HCT116 (cell line): ENCODE measurements at regions of chr3 and their contacts with region 1.

Region 1: DNA sequence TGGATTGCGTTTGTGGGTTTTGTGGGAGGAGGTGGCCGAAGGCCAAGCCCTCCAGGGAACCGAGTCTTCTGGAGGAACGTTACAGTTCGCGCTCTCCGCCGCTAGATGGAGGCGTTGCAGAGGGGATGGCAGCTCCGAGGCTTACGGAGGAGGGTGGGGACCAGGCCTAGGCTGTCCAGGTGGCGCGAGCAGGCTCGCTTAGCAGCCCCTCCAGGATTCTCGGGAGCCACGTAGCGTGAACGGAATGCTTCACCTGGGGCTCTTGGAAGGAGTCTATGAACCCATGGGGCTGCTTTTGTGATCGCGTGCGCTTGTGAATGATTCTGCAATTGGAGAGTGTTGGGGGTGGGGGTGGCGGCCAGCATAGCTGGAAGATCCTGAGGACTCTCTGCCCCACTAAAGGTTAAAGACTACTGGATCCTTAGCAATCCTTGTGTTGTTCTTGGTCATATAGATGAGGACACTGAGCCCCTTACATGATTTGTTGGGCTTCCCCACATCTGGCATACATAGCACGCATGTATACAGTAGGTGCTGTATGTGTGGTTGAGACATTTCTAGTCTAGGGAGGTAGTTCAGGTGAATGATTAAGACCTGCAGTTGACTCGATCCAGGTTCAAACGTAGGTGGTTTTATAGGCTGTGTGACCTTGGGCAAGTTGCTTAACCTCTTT is 25.7 kb downstream of the FAM3D start:
- DNase-seq: peak; percentile 50
- ATAC-seq: peak; percentile 98
- H3K4me3 ChIP-seq: no peak overlapping the region
- H3K27ac ChIP-seq: no peak overlapping the region
- H3K4me1 ChIP-seq: peaks cover 0 to 5% of the 10 kb centered on the region in 2 experiments; a peak in 1 of 4 replicates
- H3K27me3 ChIP-seq: no peaks in the 10 kb centered on the region
- CTCF ChIP-seq: peak; percentile 82 to 92 (median 91)
- POLR2A ChIP-seq: no peak
- RAD21 ChIP-seq: peak; percentile 98

Region 2: DNA sequence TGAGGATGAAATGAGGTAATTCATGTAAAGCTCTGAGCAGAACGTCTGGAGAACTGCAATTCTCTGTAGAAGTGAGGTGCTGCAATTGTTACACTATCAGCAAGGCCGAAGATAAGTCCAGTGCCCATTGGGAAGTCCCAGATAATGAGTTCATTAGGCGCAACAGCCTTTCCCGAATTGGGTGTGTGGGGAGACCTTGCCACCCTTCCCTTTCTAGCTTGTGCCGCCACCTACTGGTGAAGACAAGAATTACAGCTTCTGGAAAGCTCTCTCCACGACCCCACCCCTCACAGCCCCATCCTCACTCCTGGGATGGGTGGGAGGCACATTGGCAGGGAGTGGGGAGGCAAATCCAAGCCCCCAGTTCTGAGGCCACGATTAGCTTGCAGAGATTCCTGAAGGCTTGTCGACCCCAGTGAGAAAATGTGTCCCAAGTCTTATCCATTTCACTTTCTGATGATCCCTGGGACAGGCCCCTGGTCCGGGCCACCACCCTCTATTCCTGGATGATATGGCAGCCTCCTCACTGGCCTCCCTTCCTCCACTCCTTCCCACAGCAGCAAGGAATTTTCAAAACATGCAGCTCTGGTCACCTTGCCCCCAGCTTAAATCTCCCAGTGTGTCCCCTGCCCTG is 10.6 kb before region 1 on chr3:
- CTCF ChIA-PET with region 1: interaction called, 17 read pairs
- POLR2A ChIA-PET with region 1: no interaction called
- RAD21 ChIA-PET with region 1: no interaction called
- intact Hi-C with region 1: no loop called
- DNase-seq: peak; percentile 29
- ATAC-seq: peak; percentile 93
- H3K4me3 ChIP-seq: no peak overlapping the region
- H3K27ac ChIP-seq: no peak overlapping the region
- H3K4me1 ChIP-seq: peaks cover 0 to 3% of the 10 kb centered on the region in 2 experiments; a peak in 1 of 4 replicates
- H3K27me3 ChIP-seq: no peaks in the 10 kb centered on the region
- CTCF ChIP-seq: peak; percentile 82 to 92 (median 89)
- POLR2A ChIP-seq: no peak
- RAD21 ChIP-seq: peak; percentile 96

Region 3: GRCh38 chr3:58994746-58995330 is 354.0 kb after region 1 on chr3:
- CTCF ChIA-PET with region 1: no interaction called
- POLR2A ChIA-PET with region 1: no interaction called
- RAD21 ChIA-PET with region 1: no interaction called
- intact Hi-C with region 1: loop called (anchors 10 kb)
- DNase-seq: peak; percentile 60
- ATAC-seq: peak; percentile 59; the same call in 1 of the 2 replicates
- H3K4me3 ChIP-seq: no peak overlapping the region
- H3K27ac ChIP-seq: no peak overlapping the region
- H3K4me1 ChIP-seq: peaks cover 0 to 32% of the 10 kb centered on the region in 2 experiments; a peak in 2 of 4 replicates
- H3K27me3 ChIP-seq: no peaks in the 10 kb centered on the region
- CTCF ChIP-seq: peak; percentile 61 to 85 (median 81); a peak in 5 of 6 replicates
- POLR2A ChIP-seq: no peak
- RAD21 ChIP-seq: peak; percentile 86

Region 4: DNA sequence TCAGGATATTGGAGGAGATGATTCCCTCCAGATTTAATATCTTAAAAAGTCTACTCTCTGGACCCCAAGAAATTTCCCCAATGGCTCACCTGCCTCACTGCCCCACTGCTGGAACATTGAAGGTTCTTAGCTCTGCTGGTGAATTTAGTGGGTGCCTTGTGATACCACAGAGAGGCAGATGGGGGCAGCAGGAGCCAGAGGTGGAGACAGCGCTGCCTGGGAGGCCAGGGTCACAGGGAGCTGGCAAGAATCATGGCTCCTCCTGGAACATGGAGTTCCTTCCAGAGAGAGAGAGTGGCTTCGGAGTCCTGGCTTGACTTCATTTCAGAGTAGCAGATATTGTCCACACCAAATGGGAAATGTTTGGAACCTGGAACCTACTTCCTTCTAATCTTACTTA is 672.5 kb after region 1 on chr3:
- CTCF ChIA-PET with region 1: no interaction called
- POLR2A ChIA-PET with region 1: no interaction called
- RAD21 ChIA-PET with region 1: no interaction called
- intact Hi-C with region 1: loop called (anchors 5 kb)
- DNase-seq: peak; percentile 28
- ATAC-seq: peak; percentile 99
- H3K4me3 ChIP-seq: no peak overlapping the region
- H3K27ac ChIP-seq: no peak overlapping the region
- H3K4me1 ChIP-seq: no peaks in the 10 kb centered on the region
- H3K27me3 ChIP-seq: peaks cover 22% of the 10 kb centered on the region
- CTCF ChIP-seq: peak; percentile 44 to 70 (median 67); a peak in 5 of 6 replicates
- POLR2A ChIP-seq: no peak
- RAD21 ChIP-seq: peak; percentile 69

Region 5: DNA sequence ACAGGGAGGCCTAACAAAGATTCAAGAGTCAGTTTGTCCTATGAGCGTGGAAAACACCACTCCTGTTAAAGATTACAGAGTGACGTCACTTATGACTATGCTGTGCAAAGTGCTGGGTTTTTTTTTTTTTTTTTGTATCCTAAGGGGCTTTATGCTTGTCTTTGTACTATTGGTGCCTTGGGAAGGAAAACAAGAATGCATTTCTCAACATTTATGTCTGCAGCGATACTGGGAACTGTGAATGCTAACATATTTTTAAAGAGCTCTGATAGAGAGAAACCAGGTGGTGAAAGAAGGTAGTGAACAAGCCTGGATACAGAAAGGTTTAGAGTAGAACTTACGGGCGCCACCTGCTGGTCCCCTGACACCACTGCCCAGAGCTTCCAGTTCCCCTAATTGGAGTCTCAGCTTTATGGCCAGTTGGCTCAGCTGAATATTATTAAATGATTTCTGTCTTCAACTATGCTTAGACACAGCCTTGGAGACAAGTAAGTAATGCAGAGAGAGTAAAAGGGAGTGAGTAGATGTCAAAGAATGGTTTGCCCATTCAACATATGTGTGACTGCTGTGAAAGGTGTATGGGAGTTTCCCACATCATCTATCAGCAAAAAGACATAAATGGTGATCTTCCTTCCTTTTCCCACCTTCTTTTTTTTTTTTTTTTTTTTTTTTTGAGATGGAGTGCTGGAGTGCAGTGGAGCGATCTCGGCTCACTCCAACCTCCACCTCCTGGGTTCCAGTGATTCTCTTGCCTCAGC is 1216.9 kb after region 1 on chr3:
- CTCF ChIA-PET with region 1: no interaction called
- POLR2A ChIA-PET with region 1: no interaction called
- RAD21 ChIA-PET with region 1: no interaction called
- intact Hi-C with region 1: loop called (anchors 5 kb)
- DNase-seq: peak; percentile 73
- ATAC-seq: peak; percentile 100
- H3K4me3 ChIP-seq: no peak overlapping the region
- H3K27ac ChIP-seq: no peak overlapping the region
- H3K4me1 ChIP-seq: peaks cover 0 to 7% of the 10 kb centered on the region in 2 experiments; a peak in 2 of 4 replicates
- H3K27me3 ChIP-seq: no peaks in the 10 kb centered on the region
- CTCF ChIP-seq: peak; percentile 78 to 95 (median 80)
- POLR2A ChIP-seq: no peak
- RAD21 ChIP-seq: peak; percentile 81